ENCODE measurements at regions of chr4 and their contacts with region 1.

Region 1: GRCh38 chr4:143202824-143203223 is 18.1 kb downstream of the USP38 start:
- DNase-seq: no peak
- H3K4me3 ChIP-seq: no peak overlapping the region
- H3K27ac ChIP-seq: no peak overlapping the region
- H3K27me3 ChIP-seq: no peaks in the 10 kb centered on the region
- CTCF ChIP-seq: peak; percentile 47

Region 2: GRCh38 chr4:143186649-143187048 is 16.2 kb before region 1 on chr4:
- CTCF ChIA-PET with region 1: interaction called, 10 read pairs
- POLR2A ChIA-PET with region 1: no interaction called
- DNase-seq: no peak
- H3K4me3 ChIP-seq: peak overlapping the region; percentile 89
- H3K27ac ChIP-seq: no peak overlapping the region
- H3K27me3 ChIP-seq: no peaks in the 10 kb centered on the region
- CTCF ChIP-seq: no peak

Region 3: DNA sequence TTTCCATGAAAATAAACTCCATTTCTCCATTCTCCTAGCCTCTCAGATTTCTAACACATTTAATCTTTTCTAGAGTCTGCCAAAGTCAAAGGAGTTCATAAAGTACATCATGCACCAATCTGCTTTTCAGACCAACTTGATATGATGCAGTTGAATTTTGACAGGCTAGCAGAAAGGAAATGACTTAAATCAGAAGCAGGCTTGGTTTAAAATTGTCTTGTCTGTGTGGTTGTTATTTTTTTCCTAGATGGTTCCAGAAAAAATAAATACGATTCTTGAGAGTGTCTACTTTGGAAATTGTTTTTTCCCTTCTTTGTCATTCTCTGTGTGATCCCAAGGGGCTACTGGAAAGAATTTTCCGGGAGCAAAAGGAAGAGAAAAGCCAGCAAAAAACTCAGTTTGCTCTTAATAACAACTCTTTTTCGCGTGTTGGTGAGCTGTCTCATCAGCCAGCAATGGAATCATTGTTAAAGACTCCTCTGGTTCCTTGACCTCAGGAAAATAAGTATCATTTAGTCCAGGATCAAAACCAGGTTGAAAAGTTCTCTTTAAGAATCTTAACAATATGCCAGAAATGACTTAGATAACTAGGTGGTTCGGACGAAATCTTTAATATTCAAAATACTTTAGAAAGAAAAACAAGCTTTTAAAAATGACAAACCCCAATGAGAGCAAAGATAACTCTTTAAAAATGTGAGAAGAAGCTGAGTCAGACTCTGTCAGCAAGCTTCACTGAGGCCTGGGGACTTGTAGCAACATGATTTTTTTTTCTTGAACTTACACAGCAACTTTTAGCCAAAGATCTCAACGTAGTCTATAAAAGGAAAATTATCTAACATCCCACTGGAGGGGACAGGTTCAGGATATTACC is 84.1 kb after region 1 on chr4:
- CTCF ChIA-PET with region 1: no interaction called
- POLR2A ChIA-PET with region 1: no interaction called
- DNase-seq: peak; percentile 20
- H3K4me3 ChIP-seq: no peak overlapping the region
- H3K27ac ChIP-seq: peak overlapping the region; percentile 88
- H3K27me3 ChIP-seq: no peaks in the 10 kb centered on the region
- CTCF ChIP-seq: no peak

Region 4: DNA sequence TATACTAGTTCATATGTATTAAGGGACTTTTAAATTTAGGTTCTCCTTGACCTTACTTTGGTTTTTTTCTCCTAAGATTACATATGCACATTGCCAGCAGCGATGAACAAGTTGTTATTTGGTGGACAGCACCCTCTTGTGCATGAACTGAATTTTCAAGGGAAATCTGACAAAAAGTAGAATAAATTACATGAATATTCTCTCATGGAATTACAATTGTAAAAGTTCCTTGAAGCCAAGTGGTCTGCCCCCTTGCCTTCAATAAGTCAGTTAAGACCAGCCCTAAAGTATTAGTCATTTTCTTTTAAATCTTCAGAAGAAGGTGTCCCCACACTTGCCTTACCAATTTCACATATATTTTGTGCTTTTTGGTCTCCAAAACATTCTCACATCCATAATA is 280.0 kb after region 1 on chr4:
- CTCF ChIA-PET with region 1: interaction called, 23 read pairs
- POLR2A ChIA-PET with region 1: no interaction called
- DNase-seq: peak; percentile 36
- H3K4me3 ChIP-seq: no peak overlapping the region
- H3K27ac ChIP-seq: no peak overlapping the region
- H3K27me3 ChIP-seq: peaks cover 2% of the 10 kb centered on the region
- CTCF ChIP-seq: peak; percentile 71